ENCODE measurements at regions of chr17 and their contacts with region 1.

Region 1: DNA sequence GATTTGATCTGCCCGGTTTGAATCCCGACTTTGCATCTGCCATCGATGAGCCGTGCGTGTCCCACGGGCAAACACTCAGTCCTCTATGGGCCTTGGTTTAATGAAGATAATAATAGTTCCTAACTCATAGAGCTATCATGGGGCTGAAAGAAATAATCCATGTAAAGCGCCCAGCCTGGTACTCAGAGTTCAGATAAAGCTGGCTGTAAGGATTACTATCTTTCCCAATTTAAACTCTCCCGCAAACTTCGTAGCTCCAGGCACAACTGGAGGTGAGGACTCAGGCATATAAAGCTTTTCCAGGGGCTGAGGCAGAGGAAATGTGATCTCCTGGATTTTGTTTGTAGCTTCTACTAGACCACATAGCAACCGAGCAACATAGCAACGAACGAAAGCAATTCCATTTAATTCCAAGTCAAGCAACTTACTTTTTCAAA is 16.3 kb downstream of the ALOX15 start:
- DNase-seq: no peak
- H3K4me3 ChIP-seq: no peak overlapping the region
- H3K27ac ChIP-seq: no peak overlapping the region
- H3K4me1 ChIP-seq: peaks cover 14% of the 10 kb centered on the region
- H3K27me3 ChIP-seq: no peaks in the 10 kb centered on the region
- CTCF ChIP-seq: no peak

Region 2: DNA sequence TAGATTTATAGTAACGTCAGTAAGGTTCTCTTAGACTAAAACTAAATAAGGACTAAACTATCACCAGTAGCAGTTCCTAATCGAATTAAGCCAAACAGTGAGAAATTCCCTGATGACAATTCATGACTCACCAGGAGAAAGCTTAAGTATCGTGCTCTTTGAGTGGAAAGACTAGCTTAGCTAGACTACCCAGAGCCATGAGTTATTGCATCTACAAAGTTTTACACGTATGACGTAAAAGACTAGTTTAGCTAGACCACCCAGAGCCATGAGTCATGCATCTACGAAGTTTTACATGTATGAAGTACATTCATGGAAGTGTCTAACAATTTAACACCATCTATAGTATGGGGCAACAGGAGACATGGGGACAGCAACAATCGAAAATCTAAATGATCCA is 295.4 kb before region 1 on chr17:
- intact Hi-C with region 1: no loop called
- DNase-seq: no peak
- H3K4me3 ChIP-seq: no peak overlapping the region
- H3K27ac ChIP-seq: no peak overlapping the region
- H3K4me1 ChIP-seq: peaks cover 46% of the 10 kb centered on the region
- H3K27me3 ChIP-seq: no peaks in the 10 kb centered on the region
- CTCF ChIP-seq: no peak

Region 3: GRCh38 chr17:4565209-4566141 is 59.7 kb before region 1 on chr17:
- intact Hi-C with region 1: loop called (anchors 5 kb)
- DNase-seq: peak; percentile 51
- H3K4me3 ChIP-seq: no peak overlapping the region
- H3K27ac ChIP-seq: peak overlapping the region; percentile 43
- H3K4me1 ChIP-seq: peaks cover 25% of the 10 kb centered on the region
- H3K27me3 ChIP-seq: no peaks in the 10 kb centered on the region
- CTCF ChIP-seq: peak; percentile 86

Region 4: GRCh38 chr17:4678427-4679026 is 53.3 kb after region 1 on chr17:
- intact Hi-C with region 1: no loop called
- DNase-seq: no peak
- H3K4me3 ChIP-seq: no peak overlapping the region
- H3K27ac ChIP-seq: no peak overlapping the region
- H3K4me1 ChIP-seq: peaks cover 7% of the 10 kb centered on the region
- H3K27me3 ChIP-seq: no peaks in the 10 kb centered on the region
- CTCF ChIP-seq: no peak